Activated CD4-positive, alpha-beta T cell treated with anti-CD3 and anti-CD28 coated beads, Interleukin-2, amount 10 ng/mL, durations not matched to agents 24 days and 14 days (primary cell): ENCODE measurements at regions of chr17 and their contacts with region 1.

Region 1: DNA sequence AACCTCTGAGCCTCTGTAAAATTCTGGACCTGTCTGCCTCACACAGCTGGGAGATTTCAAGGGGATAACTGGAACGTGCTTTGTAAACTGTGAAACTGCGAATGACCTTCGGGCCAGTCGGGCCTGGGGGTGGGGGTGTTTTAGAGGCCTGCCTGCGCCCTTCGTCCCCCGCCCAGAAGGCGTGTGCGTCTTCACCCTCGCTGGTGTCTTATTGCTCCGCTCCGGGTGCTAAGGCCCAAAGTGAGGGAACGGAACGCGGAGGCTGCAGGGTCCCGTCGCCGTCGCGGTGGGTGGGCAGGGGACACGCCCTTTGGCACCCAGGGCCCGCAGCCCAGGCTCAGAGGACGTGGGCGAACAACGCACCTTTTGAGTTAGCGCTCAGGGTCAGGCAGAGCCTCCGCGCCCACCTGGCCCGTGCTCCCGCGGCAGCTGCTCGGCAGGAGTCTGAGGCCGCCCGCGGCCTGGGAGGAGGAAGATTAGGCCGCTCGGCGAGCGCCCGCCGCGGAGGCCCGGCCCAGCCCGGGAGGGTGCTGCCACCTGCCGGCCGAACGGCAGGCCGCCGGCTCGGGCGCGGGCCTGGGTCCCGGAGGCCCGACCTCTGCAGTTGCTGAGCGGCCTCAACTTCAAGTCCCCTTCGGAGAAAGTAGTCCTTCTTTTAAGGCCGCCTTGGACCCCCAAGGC is 29.7 kb downstream of the DCAKD start:
- DNase-seq: peak; percentile 92
- H3K4me3 Mint-ChIP-seq: peak overlapping the region; percentile 53
- H3K27ac Mint-ChIP-seq: no peak overlapping the region
- H3K4me1 Mint-ChIP-seq: peaks cover 18% of the 10 kb centered on the region
- H3K27me3 Mint-ChIP-seq: peaks cover 33% of the 10 kb centered on the region

Region 2: DNA sequence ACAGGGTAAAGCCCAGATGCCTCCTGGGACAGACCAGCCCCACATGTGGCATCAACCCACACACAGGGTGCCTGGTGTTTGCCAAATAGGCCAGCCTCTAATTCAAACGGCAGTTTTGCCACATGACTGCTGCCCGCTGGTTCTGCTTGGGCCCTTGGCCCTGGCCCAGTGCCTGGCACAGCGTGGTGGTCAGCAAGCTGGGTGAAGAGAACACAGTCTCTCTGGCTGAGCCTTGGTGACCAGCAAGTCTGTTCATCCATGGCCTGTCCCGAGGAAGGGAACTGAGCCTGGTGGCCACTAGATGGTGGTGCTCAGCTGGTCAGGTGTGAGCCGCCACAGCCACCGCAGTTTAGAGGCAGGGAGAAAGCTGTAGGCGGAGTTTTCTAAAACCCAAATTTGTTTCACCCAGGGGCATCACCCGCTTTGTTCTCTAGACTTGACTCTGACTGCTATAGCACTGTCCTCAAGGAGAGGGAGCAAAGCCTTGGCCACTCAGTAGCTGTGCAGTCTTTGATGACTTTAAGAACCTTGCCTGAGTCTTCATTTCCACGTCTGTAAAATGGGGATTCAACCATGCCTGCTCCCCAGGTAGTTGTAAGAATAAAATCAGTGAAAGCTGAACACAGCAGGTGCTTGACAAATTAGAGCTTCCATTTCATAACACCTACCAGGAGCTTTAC is 101.7 kb before region 1 on chr17:
- intact Hi-C with region 1: loop called (anchors 1 kb)
- DNase-seq: peak; percentile 88
- H3K4me3 Mint-ChIP-seq: no peak overlapping the region
- H3K27ac Mint-ChIP-seq: no peak overlapping the region
- H3K4me1 Mint-ChIP-seq: peaks cover 2% of the 10 kb centered on the region
- H3K27me3 Mint-ChIP-seq: peaks cover 29% of the 10 kb centered on the region

Region 3: GRCh38 chr17:44968226-44969143 is 53.3 kb before region 1 on chr17 and contains the start of gene C1QL1:
- intact Hi-C with region 1: loop called (anchors 1 kb)
- DNase-seq: peak; percentile 97
- H3K4me3 Mint-ChIP-seq: peak within 1 kb of the TSS; percentile 91
- H3K27ac Mint-ChIP-seq: peak within 1 kb of the TSS; percentile 51
- H3K4me1 Mint-ChIP-seq: peaks cover 32% of the 10 kb centered on the region
- H3K27me3 Mint-ChIP-seq: peaks cover 68% of the 10 kb centered on the region
- total RNA-seq, gene C1QL1: 0.21 and 0.42 TPM in 2 replicates

Region 4: DNA sequence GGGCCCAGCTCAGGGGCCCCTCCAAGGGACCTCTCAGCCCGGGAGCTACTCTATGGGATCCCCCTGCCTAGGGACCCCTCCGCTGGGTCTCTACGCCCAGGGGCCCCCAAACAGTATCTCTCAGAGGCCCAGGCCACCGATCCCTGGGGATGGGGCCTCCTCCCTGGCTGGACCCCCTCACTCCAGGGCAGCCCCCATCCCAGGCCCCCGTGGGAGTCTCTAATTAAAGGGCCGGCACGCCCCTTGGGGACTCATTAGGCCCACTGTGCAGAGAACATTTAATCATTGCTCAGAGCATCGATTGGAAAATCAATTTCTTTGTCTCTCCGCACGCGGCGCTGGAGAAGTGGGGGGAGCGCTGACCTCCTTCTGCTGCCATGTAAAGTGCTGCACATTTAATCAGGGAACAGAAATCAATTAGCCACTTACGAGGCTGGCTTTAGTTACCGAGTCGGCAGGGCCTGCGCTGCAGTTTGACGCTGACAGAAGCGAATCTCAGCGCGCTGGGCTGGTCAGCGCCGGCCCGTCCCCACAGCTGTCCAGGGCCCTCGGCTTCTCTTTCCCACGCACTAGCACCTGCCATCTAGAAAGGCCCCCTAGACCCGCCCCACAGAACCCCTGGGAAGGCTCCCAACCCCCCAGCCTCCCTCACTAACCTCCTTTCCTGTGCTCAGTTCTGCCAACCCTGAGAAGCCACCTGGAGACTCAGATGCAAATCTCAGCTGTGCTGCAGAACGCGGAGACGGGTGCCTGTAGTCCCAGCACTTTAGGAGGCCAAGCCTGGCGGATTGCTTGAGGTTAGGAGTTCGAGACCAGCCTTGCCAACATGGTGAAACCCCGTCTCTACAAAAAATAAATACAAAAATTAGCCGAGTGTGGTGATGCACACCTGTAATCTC is 33.5 kb before region 1 on chr17:
- intact Hi-C with region 1: no loop called
- DNase-seq: no peak
- H3K4me3 Mint-ChIP-seq: no peak overlapping the region
- H3K27ac Mint-ChIP-seq: no peak overlapping the region
- H3K4me1 Mint-ChIP-seq: no peaks in the 10 kb centered on the region
- H3K27me3 Mint-ChIP-seq: peaks cover 46% of the 10 kb centered on the region